Mammary epithelial cell (primary cell): ENCODE measurements at regions of chr16 and their contacts with region 1.

Region 1: DNA sequence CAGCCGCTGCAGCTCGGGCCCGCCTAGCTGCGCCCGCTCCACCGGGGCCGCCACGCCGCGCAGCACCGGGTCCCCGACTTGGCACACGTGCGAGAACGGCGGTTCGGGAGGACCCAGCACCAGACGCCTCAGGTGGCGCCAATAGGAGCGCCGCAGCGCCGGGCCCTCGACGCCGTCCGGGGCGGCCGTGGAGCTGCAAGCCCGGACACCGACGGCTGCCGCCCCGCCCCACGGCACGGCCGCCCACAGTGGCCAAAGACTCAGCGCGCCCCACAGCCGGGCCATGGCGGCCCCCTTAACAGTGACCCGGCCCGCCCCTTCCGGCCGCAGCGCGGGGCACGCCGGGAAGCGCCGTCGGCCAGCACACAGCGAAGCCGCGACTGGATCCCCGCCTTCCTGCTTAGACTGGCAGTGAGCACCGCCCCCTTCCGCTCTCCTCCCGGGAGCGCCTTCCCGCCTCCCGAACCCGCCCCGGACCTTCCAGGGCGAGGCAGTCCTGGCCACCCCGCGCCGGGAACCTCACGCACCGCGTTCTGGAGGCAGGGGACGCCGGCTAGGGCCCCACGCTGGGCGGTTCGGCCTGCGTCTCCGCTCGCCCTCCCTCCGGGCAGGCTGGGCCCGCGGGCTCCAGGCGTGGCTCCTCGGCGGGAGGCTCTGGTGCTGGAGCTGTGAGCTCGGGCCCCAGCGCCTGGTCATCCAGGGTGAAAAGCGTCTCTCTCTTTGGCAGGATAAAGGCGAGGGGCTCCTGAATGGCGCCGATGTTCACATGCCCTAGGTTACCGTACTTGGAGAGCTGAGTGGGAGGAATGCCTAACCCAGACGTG is at the start of gene PDF:
- DNase-seq: peak; percentile 92
- H3K4me3 ChIP-seq: peak within 1 kb of the TSS; percentile 45 to 80 (median 79)
- H3K27ac ChIP-seq: peak within 1 kb of the TSS; percentile 58
- H3K4me1 ChIP-seq: peaks cover 28% of the 10 kb centered on the region
- H3K27me3 ChIP-seq: no peaks in the 10 kb centered on the region
- CTCF ChIP-seq: no peak
- total RNA-seq, gene PDF: 20.2 to 21.7 TPM

Region 2: GRCh38 chr16:68910051-68910450 is 420.4 kb before region 1 on chr16:
- CTCF ChIA-PET with region 1: no interaction called
- dilution Hi-C with region 1: loop called (anchors 10 kb)
- in situ Hi-C with region 1: no loop called
- intact Hi-C with region 1: no loop called
- DNase-seq: no peak
- H3K4me3 ChIP-seq: no peak overlapping the region
- H3K27ac ChIP-seq: no peak overlapping the region
- H3K4me1 ChIP-seq: peaks cover 14% of the 10 kb centered on the region
- H3K27me3 ChIP-seq: no peaks in the 10 kb centered on the region
- CTCF ChIP-seq: no peak

Region 3: GRCh38 chr16:69396187-69397061 is 65.9 kb after region 1 on chr16:
- CTCF ChIA-PET with region 1: no interaction called
- dilution Hi-C with region 1: no loop called
- in situ Hi-C with region 1: no loop called
- intact Hi-C with region 1: no loop called
- DNase-seq: peak; percentile 90
- H3K4me3 ChIP-seq: no peak overlapping the region
- H3K27ac ChIP-seq: peak overlapping the region; percentile 65
- H3K4me1 ChIP-seq: peaks cover 18% of the 10 kb centered on the region
- H3K27me3 ChIP-seq: no peaks in the 10 kb centered on the region
- CTCF ChIP-seq: peak; percentile 55 to 57